OCI-LY7 (cell line): ENCODE measurements at regions of chr1 and their contacts with region 1.

Region 1: DNA sequence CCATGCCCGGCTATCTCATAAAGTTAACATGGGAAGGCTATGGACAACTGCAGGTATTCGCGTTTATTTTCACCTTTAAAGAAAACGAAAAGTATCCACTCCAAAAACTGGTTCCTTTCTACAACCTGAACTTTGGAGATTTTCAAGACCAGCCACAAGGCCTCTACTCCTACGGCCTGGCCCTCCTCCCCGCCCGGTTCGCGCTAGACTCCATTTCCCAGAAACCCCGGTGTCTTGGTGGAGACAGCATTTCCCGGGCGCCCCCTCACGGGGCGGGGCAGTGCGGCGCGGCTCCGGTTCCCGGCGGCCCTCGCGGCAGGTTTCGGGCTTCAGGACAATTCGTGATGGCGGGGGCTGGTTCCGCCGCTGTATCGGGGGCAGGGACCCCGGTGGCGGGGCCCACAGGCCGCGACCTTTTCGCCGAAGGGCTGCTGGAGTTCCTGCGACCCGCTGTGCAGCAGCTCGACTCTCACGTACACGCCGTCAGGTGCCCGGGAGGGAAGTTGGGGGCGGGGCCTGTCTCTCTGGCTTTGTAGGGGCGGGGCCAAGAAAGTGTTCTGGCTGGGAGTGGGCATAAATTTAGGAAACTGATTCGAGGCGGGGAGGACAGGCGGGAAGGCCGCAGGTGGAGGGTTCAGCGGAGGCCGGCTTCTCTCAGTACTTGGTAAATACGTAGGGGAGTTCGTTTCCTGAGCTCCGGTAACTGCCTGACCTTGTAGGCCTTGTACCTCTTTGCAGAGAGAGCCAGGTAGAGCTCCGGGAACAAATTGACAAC is at the start of gene SNAPIN:
- DNase-seq: peak; percentile 91
- H3K4me3 ChIP-seq: peak within 1 kb of the TSS; percentile 96
- H3K27ac ChIP-seq: peak within 1 kb of the TSS; percentile 68
- H3K4me1 ChIP-seq: peaks cover 18% of the 10 kb centered on the region
- CTCF ChIP-seq: 0 out of 2 replicates have a peak, but pooled peaks have one; percentile 24
- total RNA-seq, gene SNAPIN: 33.2 and 44.5 TPM in 2 replicates

Region 2: DNA sequence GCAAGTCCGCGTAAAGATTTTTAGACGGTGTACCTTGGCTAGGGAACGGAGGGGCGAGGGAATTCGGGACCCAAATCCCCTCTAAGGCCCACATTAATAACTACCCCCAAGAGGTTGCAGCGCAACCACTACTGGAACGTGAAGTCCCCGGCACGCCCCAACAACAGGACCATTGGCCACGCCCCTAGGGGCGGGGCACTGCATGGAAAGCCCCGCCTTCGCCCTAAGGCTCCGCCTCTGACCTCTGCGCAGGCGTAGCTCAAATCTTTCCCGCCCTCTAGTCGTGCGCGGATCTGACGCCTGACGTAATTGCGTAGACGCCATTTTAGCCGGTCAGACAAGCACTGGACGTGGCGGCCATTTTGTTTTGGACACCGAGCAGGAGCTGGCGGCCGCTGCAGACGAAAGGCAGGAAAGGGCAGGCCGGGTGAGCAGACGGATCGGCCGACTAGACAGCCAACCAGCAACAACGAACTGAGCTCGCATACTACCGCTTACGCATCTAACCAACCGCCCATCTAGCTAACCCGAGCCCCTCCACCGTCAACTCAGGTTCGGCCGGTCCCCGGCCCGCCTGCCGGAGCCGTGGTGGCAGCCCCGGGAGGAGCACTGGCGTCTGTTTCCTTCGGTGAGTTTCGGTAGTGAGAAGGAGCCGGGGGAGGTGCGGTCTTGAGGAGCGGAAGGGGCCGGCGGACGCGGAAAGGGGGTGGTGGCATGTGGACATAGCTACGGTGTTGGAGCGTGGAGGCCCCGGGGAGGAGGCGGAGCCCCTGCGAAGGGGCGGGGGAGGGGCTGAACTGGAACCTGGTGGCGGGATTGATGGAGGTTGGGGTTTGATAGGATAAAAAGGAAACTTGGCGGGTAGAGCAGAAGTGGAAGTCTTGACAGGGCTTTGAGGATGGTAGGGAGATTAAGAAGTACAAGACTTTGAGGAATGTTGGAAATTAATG is 24.6 kb before region 1 on chr1 and contains the start of gene CHTOP:
- CTCF ChIA-PET with region 1: interaction called, 3 read pairs
- POLR2A ChIA-PET with region 1: interaction called, 8 read pairs
- intact Hi-C with region 1: loop called (anchors 2 kb)
- DNase-seq: peak; percentile 99
- H3K4me3 ChIP-seq: peak within 1 kb of the TSS; percentile 83
- H3K27ac ChIP-seq: peak within 1 kb of the TSS; percentile 97
- H3K4me1 ChIP-seq: peaks cover 16% of the 10 kb centered on the region
- CTCF ChIP-seq: no peak
- total RNA-seq, gene CHTOP: 70.9 and 85.3 TPM in 2 replicates